Right ventricle myocardium superior (tissue), 1 donor: ENCODE measurements at regions of chr1 and their contacts with region 1.

Region 1: DNA sequence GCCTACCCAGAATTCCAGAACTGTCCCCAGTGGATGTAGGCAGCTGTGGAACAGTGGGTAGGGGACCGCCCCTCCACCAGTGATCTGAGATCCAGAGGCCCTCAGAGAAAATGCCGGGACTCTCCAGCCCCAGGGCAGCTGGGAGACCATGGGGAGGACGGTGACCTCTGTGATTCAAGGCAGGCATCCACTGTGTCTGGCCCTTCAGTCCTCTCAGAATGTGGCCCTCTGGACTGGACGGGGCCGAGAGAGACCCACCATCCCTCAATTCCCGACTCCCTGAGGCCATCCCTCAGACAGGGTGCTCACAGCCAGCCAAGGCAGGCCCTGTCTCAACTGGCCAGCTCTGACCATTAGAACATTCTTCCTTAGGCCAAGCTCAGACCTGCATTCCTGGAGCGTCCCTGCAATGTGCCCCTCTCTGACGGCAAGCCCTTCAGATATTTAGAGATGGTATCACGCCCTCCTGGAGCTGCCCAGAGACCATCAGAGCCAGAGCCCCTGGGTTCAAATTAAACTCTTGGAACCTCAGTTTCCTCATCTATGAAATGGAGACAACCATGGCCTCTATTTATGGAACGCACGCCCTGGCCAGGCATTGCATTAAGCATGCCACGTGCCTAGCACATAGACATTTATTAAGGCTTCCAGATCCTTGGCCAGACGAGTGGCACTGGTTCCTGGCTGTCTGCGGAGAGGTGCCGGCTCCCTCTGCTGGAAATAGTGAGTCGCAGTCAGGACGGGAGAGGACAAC is 9.6 kb upstream of the EPS8L3 start:
- DNase-seq: peak; percentile 88
- ATAC-seq: peak; percentile 90

Region 2: GRCh38 chr1:109548321-109549267 is 224.7 kb before region 1 on chr1 and contains the start of gene GNAI3:
- intact Hi-C with region 1: loop called (anchors 2 kb)
- DNase-seq: peak; percentile 98
- ATAC-seq: peak; percentile 97
- total RNA-seq, gene GNAI3: 2.4 TPM

Region 3: DNA sequence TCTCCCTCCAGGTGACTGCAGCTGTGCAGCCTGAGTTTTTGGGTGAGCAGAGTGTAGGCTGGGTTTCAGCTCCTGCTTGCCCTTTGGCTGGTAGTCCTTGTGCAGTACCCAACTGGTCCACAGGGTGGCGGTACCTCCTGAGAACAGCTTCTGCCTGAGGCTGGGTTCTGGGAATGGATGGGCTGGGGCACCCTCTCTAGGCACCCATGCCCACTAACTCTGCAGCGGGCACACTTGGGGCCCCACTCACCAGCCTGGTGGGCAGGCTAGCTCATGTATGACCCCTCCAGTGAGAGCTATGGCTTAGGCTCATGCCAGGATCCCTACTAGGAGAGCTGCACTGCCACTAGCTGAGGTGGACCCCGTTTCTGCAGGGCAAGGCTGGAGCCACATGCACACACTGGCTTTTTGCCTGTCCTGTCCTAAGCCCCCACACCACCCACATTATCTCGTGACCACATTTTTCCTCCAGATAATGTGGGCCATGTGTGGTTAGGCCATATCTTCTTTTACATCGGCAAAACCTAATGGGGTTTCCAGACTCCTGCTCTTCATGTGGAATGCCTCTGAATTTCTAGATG is 132.9 kb before region 1 on chr1:
- intact Hi-C with region 1: loop called (anchors 1 kb)
- DNase-seq: peak; percentile 92
- ATAC-seq: peak; percentile 60

Region 4: GRCh38 chr1:109667452-109668122 is 105.7 kb before region 1 on chr1 and contains the start of gene GSTM2:
- intact Hi-C with region 1: loop called (anchors 5 kb)
- DNase-seq: peak; percentile 97
- ATAC-seq: peak; percentile 99
- total RNA-seq, gene GSTM2: 70.8 TPM

Region 5: GRCh38 chr1:109704173-109704572 is 69.2 kb before region 1 on chr1:
- intact Hi-C with region 1: no loop called
- DNase-seq: no peak
- ATAC-seq: no peak

Region 6: DNA sequence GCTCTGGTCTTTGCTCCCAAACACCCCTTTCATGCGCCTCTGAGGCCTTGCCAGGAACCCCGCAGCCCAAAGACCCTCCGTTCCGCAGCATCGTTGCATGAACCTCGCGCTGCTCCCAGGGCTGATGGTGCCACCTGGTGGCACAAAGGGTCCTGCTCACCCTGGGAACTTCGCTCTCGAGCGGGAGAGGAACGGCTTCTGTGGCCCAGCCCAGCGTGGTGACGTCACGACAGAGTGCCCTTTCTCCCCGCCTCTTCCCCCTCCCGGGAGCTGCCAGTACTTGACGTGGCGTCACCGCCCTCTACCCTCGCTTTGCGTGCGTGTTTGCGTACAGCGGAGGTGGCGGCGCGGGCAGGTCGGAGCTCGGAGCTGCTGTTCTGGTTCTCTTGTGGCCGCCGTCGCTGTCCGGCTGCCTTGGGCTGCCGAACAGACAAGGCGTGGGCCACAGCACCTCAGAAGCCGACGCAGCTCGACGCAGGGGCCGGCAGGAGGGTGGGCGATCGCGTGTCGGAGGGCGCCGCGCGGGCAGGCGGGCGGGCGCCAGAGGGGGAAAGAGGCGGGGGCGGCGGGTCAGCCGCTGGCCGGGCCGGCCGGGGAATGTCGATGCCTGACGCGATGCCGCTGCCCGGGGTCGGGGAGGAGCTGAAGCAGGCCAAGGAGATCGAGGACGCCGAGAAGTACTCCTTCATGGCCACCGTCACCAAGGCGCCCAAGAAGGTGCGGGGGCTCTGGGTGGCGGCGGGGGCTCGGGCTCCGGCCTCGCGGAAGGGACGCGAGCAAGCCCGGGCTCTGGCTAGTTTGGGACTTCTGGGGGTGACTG is 211.3 kb after region 1 on chr1 and contains the start of gene AHCYL1:
- intact Hi-C with region 1: loop called (anchors 2 kb)
- DNase-seq: peak; percentile 100
- ATAC-seq: peak; percentile 96
- total RNA-seq, gene AHCYL1: 39.8 TPM